ENCODE measurements at regions of chr2 and their contacts with region 1.

Region 1: GRCh38 chr2:85288244-85288725 is 39.5 kb downstream of the TGOLN2 start:
- DNase-seq: no peak
- ATAC-seq: no peak
- H3K4me3 ChIP-seq: no peak overlapping the region
- H3K27ac ChIP-seq: no peak overlapping the region
- H3K4me1 ChIP-seq: peaks cover 0 to 18% (median 12%) of the 10 kb centered on the region in 9 donors
- H3K27me3 ChIP-seq: no peaks in the 10 kb centered on the region
- CTCF ChIP-seq: no peak

Region 2: GRCh38 chr2:85015653-85016360 is 272.5 kb before region 1 on chr2:
- intact Hi-C with region 1: no loop called
- DNase-seq: no peak
- ATAC-seq: no peak
- H3K4me3 ChIP-seq: no peak overlapping the region
- H3K27ac ChIP-seq: peak overlapping the region in 6 of 10 donors; percentile 3 to 36 (median 22)
- H3K4me1 ChIP-seq: peaks cover 0 to 84% (median 66%) of the 10 kb centered on the region in 9 donors
- H3K27me3 ChIP-seq: no peaks in the 10 kb centered on the region
- CTCF ChIP-seq: peak in 3 of 9 donors; percentile 10 to 24 (median 16)

Region 3: GRCh38 chr2:85248773-85249509 is 39.3 kb before region 1 on chr2:
- intact Hi-C with region 1: loop called in 2 of 10 experiments (anchors 5 kb)
- DNase-seq: peak in 1 of 2 donors; percentile 47
- ATAC-seq: peak; percentile 53 to 76 (median 64)
- H3K4me3 ChIP-seq: peak overlapping the region in 2 of 10 donors; percentile 1 to 2
- H3K27ac ChIP-seq: peak overlapping the region; percentile 27 to 85 (median 69)
- H3K4me1 ChIP-seq: peaks cover 19 to 88% (median 59%) of the 10 kb centered on the region in 9 donors
- H3K27me3 ChIP-seq: no peaks in the 10 kb centered on the region
- CTCF ChIP-seq: no peak

Region 4: DNA sequence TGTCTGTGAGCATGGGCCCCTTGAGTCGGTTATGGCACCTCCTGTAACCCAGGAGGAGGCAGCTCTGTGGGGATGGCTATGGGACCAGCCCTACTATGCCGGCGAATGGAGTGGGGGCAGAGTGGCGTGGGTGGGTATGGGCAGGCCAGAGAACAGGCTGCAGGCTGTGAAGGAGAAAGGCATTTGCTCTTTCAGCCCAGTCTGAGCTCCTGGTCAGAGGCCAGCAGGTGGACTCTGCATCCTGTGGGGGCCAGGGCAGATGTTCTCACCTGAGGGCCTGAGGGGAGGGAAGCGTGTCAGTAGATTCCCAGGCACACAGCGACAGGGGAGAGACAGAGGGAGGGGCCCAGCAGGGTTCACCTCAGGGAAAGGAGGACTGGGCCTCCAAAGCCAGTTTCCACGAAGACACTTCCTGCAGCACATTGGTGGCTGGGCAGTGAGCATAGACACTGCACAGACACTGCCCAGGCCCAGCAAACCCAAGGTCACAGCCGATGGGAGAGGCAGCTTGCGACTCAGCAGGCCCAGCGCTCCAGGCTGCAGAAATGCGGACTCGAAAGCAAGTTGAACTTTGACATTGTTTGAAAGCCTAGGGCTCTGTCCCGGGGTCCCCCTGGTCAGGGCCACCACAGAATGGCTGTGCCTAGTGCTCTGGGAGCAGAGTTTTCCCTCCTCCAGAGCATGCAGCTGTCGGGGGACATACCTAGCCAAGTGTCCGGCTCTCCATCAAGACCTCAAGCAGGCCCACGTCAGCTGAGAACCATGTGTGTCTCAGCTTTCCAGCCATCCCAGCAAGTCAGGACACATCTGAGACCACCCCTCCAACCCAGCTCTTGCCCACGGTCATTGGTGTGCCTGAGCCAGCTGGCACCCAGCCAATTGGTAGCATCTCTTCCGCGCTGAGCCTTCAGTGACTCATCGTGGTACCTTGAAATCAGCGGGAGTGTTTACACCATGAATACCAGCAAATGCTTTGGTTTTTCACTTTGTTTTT is 14.2 kb before region 1 on chr2:
- intact Hi-C with region 1: no loop called
- DNase-seq: no peak
- ATAC-seq: no peak
- H3K4me3 ChIP-seq: no peak overlapping the region
- H3K27ac ChIP-seq: peak overlapping the region in 2 of 10 donors; percentile 6 to 88
- H3K4me1 ChIP-seq: peaks cover 14 to 94% (median 52%) of the 10 kb centered on the region in 9 donors
- H3K27me3 ChIP-seq: no peaks in the 10 kb centered on the region
- CTCF ChIP-seq: no peak